OCI-LY7 (cell line): ENCODE measurements at regions of chrX and their contacts with region 1.

Region 1: GRCh38 chrX:38166478-38167083 is 54.1 kb downstream of the SRPX start:
- DNase-seq: peak; percentile 47
- H3K4me3 ChIP-seq: no peak overlapping the region
- H3K27ac ChIP-seq: no peak overlapping the region
- H3K4me1 ChIP-seq: no peaks in the 10 kb centered on the region
- CTCF ChIP-seq: peak; percentile 84

Region 2: DNA sequence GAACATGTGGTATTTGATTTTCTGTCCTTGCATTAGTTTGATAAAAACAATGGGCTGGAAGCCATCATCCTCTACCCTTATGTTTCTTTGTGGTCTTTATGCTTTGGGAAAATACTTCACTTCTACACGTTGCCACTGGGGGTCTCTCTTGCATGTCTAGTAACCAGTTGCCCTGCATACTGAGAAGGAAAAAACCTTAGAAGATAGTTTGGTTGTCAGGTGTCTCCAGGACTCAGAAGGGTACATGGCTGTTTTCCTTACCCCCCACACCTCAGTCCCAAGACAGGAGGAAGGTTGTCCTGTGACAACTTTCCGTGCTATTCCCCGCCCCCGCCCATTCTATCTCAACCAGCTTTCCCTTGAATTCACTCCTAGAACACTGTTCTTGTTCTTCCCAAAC is 657.2 kb before region 1 on chrX:
- CTCF ChIA-PET with region 1: no interaction called
- POLR2A ChIA-PET with region 1: no interaction called
- intact Hi-C with region 1: loop called (anchors 5 kb)
- DNase-seq: peak; percentile 4
- H3K4me3 ChIP-seq: no peak overlapping the region
- H3K27ac ChIP-seq: no peak overlapping the region
- H3K4me1 ChIP-seq: no peaks in the 10 kb centered on the region
- CTCF ChIP-seq: peak; percentile 60

Region 3: GRCh38 chrX:37776283-37776986 is 390.1 kb before region 1 on chrX:
- CTCF ChIA-PET with region 1: no interaction called
- POLR2A ChIA-PET with region 1: no interaction called
- intact Hi-C with region 1: no loop called
- DNase-seq: peak; percentile 77
- H3K4me3 ChIP-seq: peak overlapping the region; percentile 32
- H3K27ac ChIP-seq: peak overlapping the region; percentile 75
- H3K4me1 ChIP-seq: peaks cover 43% of the 10 kb centered on the region
- CTCF ChIP-seq: no peak

Region 4: GRCh38 chrX:37854148-37854547 is 312.4 kb before region 1 on chrX:
- CTCF ChIA-PET with region 1: no interaction called
- POLR2A ChIA-PET with region 1: no interaction called
- intact Hi-C with region 1: loop called (anchors 10 kb)
- DNase-seq: no peak
- H3K4me3 ChIP-seq: no peak overlapping the region
- H3K27ac ChIP-seq: no peak overlapping the region
- H3K4me1 ChIP-seq: no peaks in the 10 kb centered on the region
- CTCF ChIP-seq: no peak

Region 5: DNA sequence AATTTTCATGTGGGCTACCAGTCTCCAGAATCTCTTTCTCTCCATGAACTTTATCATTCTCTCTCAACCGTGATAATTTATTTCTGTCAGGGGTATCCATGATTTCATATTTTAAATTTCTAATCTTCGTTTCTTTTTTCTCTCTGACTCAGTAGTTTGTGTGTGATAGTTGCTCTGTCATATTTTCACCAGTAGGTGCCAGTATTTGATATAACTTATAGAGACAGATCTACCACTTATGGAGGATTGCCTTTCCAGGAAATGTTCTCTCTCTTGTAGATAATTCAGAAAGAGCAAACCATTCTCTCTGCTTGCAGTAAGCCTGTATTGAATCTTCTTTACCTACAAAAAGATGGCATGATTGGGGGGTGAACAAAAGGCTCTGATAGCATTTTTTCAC is 239.9 kb before region 1 on chrX:
- CTCF ChIA-PET with region 1: no interaction called
- POLR2A ChIA-PET with region 1: no interaction called
- intact Hi-C with region 1: loop called (anchors 1 kb)
- DNase-seq: peak; percentile 40
- H3K4me3 ChIP-seq: no peak overlapping the region
- H3K27ac ChIP-seq: no peak overlapping the region
- H3K4me1 ChIP-seq: no peaks in the 10 kb centered on the region
- CTCF ChIP-seq: peak; percentile 77